Activated B cell treated with CpG ODN at 0.5 μM for 24 hours (primary cell): ENCODE measurements at regions of chr7 and their contacts with region 1.

Region 1: DNA sequence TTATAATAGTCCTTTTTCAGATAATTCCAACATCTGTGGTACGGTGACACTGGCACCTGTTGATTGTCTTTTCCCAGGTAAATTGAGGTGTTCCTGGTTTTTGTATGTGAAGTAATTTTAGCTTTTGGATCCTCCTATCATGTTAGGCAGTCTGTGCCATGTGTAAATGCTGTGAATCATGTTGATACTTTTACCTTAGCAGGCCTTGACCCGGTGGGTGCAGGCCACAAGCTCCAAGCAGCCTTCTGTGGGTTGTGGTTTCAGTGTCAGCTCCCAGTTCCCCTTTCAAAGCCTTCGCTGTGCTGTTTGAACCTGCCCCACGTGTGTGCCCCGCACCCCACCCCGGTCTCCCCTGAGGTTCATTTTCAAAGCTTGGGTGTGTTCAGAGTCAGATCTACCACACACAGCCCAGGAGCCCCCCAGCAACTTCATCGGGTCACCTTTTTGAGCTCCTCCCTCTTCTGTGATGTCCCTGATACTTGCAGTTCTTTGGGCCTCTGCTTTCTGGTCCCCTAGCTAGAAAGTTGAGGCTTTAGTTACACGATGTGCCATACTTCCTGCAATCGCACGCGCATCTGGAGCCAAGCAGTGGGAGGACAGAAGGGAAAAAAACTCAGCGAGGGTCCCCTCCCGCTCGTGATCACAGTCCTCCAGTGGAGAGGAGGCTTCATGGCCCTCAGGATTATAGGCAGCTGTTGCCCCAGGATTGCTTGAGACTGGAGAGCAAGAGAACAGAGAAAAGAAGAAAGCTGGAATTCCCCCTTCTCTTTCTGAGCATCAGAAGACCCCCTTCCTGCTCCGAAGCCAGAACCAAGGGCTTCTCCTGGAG is 8.7 kb upstream of the BHLHA15 start:
- DNase-seq: peak; percentile 81
- ATAC-seq: peak; percentile 87
- H3K4me3 Mint-ChIP-seq: peak overlapping the region; percentile 80
- H3K27ac Mint-ChIP-seq: peak overlapping the region; percentile 86
- H3K4me1 Mint-ChIP-seq: peaks cover 57% of the 10 kb centered on the region
- H3K27me3 Mint-ChIP-seq: peaks cover 3% of the 10 kb centered on the region
- CTCF ChIP-seq: no peak

Region 2: GRCh38 chr7:96321658-96322372 is 1880.8 kb before region 1 on chr7 and contains the start of gene SLC25A13:
- CTCF ChIA-PET with region 1: no interaction called
- POLR2A ChIA-PET with region 1: no interaction called
- intact Hi-C with region 1: loop called (anchors 2 kb)
- DNase-seq: peak; percentile 69
- ATAC-seq: peak; percentile 71
- H3K4me3 Mint-ChIP-seq: peak within 1 kb of the TSS; percentile 90
- H3K27ac Mint-ChIP-seq: peak within 1 kb of the TSS; percentile 88
- H3K4me1 Mint-ChIP-seq: peaks cover 41% of the 10 kb centered on the region
- H3K27me3 Mint-ChIP-seq: no peaks in the 10 kb centered on the region
- CTCF ChIP-seq: no peak
- total RNA-seq, gene SLC25A13: 28.5 and 29.1 TPM in 2 replicates

Region 3: GRCh38 chr7:97971990-97972943 is 230.3 kb before region 1 on chr7:
- CTCF ChIA-PET with region 1: no interaction called
- POLR2A ChIA-PET with region 1: no interaction called
- intact Hi-C with region 1: loop called (anchors 2 kb)
- DNase-seq: peak; percentile 75
- ATAC-seq: peak; percentile 92
- H3K4me3 Mint-ChIP-seq: peak overlapping the region; percentile 92
- H3K27ac Mint-ChIP-seq: peak overlapping the region; percentile 91
- H3K4me1 Mint-ChIP-seq: peaks cover 22% of the 10 kb centered on the region
- H3K27me3 Mint-ChIP-seq: peaks cover 2% of the 10 kb centered on the region
- CTCF ChIP-seq: no peak

Region 4: GRCh38 chr7:98168181-98168905 is 34.2 kb before region 1 on chr7:
- CTCF ChIA-PET with region 1: interaction called, 17 read pairs
- POLR2A ChIA-PET with region 1: interaction called, 9 read pairs
- intact Hi-C with region 1: loop called (anchors 1 kb)
- DNase-seq: peak; percentile 34
- ATAC-seq: peak; percentile 66
- H3K4me3 Mint-ChIP-seq: no peak overlapping the region
- H3K27ac Mint-ChIP-seq: no peak overlapping the region
- H3K4me1 Mint-ChIP-seq: peaks cover 10% of the 10 kb centered on the region
- H3K27me3 Mint-ChIP-seq: peaks cover 2% of the 10 kb centered on the region
- CTCF ChIP-seq: peak; percentile 56

Region 5: DNA sequence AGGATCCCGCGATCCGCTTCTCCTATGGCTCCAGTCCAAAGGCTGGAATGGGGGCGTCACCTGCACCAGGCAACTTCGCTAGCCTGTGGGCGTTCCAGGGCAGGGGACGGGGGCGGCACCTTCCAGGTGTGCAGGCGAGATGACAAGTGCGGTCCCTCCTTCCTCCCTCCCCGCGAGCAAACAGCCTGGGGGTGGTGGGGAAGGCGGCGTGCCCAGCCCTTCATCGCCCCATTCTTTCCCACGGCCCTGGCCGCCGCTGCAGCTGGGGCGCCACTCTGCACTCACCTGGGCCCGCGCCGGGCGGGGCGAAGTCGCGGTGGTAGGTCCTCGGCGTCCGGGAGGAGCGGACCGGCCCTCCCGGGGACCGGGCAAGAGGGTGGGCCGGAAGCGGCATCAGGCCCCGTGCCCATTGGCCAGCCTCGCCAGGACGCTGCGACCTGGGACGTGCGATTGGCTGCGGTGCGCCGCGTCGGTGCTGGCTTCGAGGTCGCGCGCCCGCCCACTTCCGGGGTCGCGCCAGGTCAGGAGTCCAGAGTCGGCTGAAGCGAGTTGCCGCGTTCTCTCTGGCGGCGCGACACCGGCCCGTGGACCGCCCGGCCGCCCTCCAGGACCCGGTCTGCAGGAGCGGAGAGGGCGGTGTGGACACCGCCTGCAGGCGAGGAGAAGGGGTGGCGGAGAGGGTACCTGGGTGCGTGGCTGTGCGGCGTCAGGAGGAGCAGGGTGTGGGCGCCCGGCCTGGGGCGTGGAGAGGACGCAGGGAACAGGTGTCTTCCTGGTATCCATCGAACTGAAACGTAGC is 49.5 kb after region 1 on chr7 and contains the start of gene TECPR1:
- CTCF ChIA-PET with region 1: no interaction called
- POLR2A ChIA-PET with region 1: interaction called, 7 read pairs
- intact Hi-C with region 1: loop called (anchors 1 kb)
- DNase-seq: peak; percentile 85
- ATAC-seq: peak; percentile 96
- H3K4me3 Mint-ChIP-seq: peak within 1 kb of the TSS; percentile 94
- H3K27ac Mint-ChIP-seq: peak within 1 kb of the TSS; percentile 80
- H3K4me1 Mint-ChIP-seq: peaks cover 39% of the 10 kb centered on the region
- H3K27me3 Mint-ChIP-seq: no peaks in the 10 kb centered on the region
- CTCF ChIP-seq: no peak
- total RNA-seq, gene TECPR1: 24.6 and 34.5 TPM in 2 replicates

Region 6: DNA sequence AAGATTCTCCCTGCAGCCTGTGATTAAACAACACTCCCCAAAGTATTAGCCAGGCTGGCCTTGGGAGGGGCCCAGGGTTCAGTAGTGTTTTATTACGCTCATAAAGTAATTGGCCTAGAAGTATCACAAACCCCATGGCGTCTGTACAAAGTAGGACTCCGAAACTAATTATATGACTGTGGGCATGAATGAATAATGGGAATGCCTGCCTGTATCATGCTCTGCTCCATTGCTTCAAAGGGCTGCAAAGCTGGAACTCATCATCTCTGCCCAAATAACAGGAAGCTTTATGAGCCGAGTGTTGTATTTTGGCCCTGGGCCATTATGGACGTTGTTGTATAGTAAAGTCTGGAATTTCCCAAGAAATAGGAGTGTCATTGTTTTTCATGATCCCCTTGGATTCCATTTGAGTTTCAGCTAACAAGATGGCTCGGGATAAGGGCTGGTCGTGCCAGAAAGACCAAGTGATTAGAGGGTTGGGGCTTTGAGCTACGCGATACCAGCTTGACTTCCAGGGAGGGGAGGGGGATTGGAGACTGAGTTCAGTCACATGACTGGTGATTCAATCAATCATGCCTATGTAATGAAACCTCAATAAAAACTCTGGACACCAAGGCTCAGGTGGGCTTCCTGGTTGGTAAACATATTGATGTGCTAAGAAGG is 349.2 kb after region 1 on chr7:
- CTCF ChIA-PET with region 1: no interaction called
- POLR2A ChIA-PET with region 1: no interaction called
- intact Hi-C with region 1: no loop called
- DNase-seq: no peak
- ATAC-seq: no peak
- H3K4me3 Mint-ChIP-seq: no peak overlapping the region
- H3K27ac Mint-ChIP-seq: no peak overlapping the region
- H3K4me1 Mint-ChIP-seq: no peaks in the 10 kb centered on the region
- H3K27me3 Mint-ChIP-seq: peaks cover 7% of the 10 kb centered on the region
- CTCF ChIP-seq: no peak

Region 7: GRCh38 chr7:98713165-98713810 is 510.7 kb after region 1 on chr7:
- CTCF ChIA-PET with region 1: no interaction called
- POLR2A ChIA-PET with region 1: no interaction called
- intact Hi-C with region 1: no loop called
- DNase-seq: no peak
- ATAC-seq: no peak
- H3K4me3 Mint-ChIP-seq: no peak overlapping the region
- H3K27ac Mint-ChIP-seq: no peak overlapping the region
- H3K4me1 Mint-ChIP-seq: no peaks in the 10 kb centered on the region
- H3K27me3 Mint-ChIP-seq: peaks cover 1% of the 10 kb centered on the region
- CTCF ChIP-seq: no peak

Region 8: DNA sequence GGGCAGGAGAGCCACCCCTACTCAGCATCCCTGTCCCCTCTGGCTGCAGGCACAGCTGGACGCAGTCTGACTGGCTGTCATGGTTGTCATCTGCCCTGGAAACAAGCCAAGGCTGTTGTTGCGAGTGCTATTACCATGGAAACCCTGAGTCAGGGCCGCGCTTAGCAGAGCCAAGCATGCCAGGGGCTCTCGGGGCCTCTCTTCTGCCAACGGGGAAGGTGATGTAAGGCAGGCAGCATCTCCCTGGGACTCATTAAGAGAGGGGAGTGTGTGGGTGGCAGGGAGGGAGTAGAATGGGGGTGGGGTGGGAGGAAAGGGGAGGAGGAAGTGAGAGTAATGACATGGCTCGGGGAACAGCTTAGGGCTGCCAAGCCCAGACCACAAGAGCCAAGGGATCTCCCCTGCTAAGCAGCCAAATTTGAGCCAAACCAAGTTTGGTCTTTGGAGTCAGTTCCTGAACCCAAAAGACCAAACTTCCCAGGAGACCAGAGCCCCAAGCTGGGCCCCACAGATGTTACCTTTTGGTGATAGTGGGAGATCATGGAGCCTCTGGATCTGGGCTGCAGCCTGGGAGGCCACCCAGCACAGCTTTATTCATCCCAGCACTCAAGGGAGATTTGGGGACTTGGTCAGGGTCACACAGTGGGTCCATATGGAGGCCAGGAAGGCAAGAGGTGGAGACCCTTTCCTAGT is 599.7 kb after region 1 on chr7:
- CTCF ChIA-PET with region 1: no interaction called
- POLR2A ChIA-PET with region 1: interaction called, 7 read pairs
- intact Hi-C with region 1: loop called (anchors 10 kb)
- DNase-seq: peak; percentile 38
- ATAC-seq: peak; percentile 86
- H3K4me3 Mint-ChIP-seq: peak overlapping the region; percentile 41
- H3K27ac Mint-ChIP-seq: no peak overlapping the region
- H3K4me1 Mint-ChIP-seq: peaks cover 18% of the 10 kb centered on the region
- H3K27me3 Mint-ChIP-seq: peaks cover 19% of the 10 kb centered on the region
- CTCF ChIP-seq: no peak